CD4-positive, alpha-beta memory T cell (primary cell): ENCODE measurements at regions of chr12 and their contacts with region 1.

Region 1: GRCh38 chr12:56688129-56688845 is at the start of gene PTGES3:
- DNase-seq: peak; percentile 97 to 98 (median 98)
- H3K4me3 ChIP-seq: peak within 1 kb of the TSS; percentile 83 to 99
- H3K4me3 Mint-ChIP-seq: peak within 1 kb of the TSS; percentile 99 to 100 (median 100)
- H3K27ac ChIP-seq: peak within 1 kb of the TSS; percentile 99
- H3K27ac Mint-ChIP-seq: peak within 1 kb of the TSS; percentile 96 to 100 (median 100)
- H3K4me1 ChIP-seq: peaks cover 36% of the 10 kb centered on the region
- H3K4me1 Mint-ChIP-seq: peaks cover 16 to 51% (median 25%) of the 10 kb centered on the region in 4 donors
- H3K27me3 ChIP-seq: no peaks in the 10 kb centered on the region
- H3K27me3 Mint-ChIP-seq: no peaks in the 10 kb centered on the region
- total RNA-seq, gene PTGES3: 191 to 195 TPM

Region 2: DNA sequence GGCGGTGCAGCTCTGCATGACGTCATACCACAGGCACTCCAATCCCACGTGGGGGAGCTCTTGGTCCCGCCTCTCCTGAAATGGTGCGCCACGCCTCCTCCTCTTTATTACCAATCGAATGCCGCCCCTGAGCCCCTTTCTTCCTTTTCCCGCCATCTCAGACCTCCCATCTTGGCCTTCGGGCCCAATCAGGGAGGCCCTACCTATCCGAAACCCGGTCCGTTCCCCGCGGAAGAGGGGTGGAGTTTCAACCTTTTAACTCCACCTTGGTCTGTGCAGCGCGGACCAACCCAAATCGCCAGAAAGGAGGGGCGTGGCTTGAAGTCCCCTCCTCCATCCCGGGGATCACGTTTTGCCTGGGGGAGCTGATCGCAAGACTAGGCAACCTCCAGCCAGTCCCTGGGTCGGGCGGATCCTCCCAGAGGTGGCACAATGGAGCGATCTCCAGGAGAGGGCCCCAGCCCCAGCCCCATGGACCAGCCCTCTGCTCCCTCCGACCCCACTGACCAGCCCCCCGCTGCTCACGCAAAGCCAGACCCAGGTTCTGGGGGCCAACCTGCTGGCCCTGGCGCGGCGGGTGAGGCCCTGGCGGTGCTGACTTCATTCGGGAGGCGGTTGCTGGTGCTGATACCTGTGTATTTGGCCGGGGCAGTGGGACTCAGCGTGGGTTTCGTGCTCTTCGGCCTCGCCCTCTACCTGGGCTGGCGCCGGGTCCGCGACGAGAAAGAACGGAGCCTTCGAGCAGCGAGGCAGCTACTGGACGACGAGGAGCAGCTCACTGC is 560.2 kb before region 1 on chr12 and contains the start of gene ESYT1:
- CTCF ChIA-PET with region 1: no interaction called
- POLR2A ChIA-PET with region 1: no interaction called
- intact Hi-C with region 1: loop called (anchors 5 kb)
- DNase-seq: peak; percentile 96 to 100 (median 99)
- H3K4me3 ChIP-seq: peak within 1 kb of the TSS; percentile 81 to 96
- H3K4me3 Mint-ChIP-seq: peak within 1 kb of the TSS; percentile 96 to 100 (median 98)
- H3K27ac ChIP-seq: peak within 1 kb of the TSS; percentile 82
- H3K27ac Mint-ChIP-seq: peak within 1 kb of the TSS; percentile 89 to 99 (median 98)
- H3K4me1 ChIP-seq: peaks cover 69% of the 10 kb centered on the region
- H3K4me1 Mint-ChIP-seq: peaks cover 46 to 84% (median 59%) of the 10 kb centered on the region in 4 donors
- H3K27me3 ChIP-seq: no peaks in the 10 kb centered on the region
- H3K27me3 Mint-ChIP-seq: no peaks in the 10 kb centered on the region
- total RNA-seq, gene ESYT1: 249 to 258 TPM

Region 3: DNA sequence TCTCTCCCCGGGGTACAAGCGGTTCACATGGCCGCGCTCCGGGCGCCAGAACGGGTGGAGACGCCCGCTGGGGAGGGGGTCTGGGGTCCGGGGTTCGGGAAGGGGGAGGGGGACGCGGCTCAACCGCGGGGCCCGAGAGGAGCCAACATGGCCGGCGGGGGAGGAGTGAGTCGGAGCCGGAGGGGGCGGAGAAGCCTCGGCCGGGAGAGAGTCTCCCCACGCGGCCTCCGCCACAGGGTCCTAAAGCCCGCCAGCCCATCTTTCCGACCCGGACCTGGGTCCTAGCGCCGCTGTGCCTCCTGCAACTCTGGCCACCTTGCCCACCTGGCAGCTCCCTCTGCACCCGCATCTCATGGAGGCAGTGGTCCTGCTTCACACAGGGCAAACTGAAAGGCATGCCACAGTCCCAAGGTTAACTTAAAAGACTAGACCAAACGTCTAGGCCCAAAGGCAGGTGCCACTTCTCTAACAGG is 58.1 kb before region 1 on chr12 and contains the start of gene BAZ2A:
- CTCF ChIA-PET with region 1: interaction called, 40 read pairs
- POLR2A ChIA-PET with region 1: interaction called, 210 read pairs
- intact Hi-C with region 1: loop called (anchors 1 kb)
- DNase-seq: peak; percentile 80 to 86 (median 83)
- H3K4me3 ChIP-seq: peak within 1 kb of the TSS; percentile 90 to 98
- H3K4me3 Mint-ChIP-seq: peak within 1 kb of the TSS; percentile 86 to 99 (median 92)
- H3K27ac ChIP-seq: peak within 1 kb of the TSS; percentile 93
- H3K27ac Mint-ChIP-seq: peak within 1 kb of the TSS; percentile 82 to 98 (median 94)
- H3K4me1 ChIP-seq: peaks cover 76% of the 10 kb centered on the region
- H3K4me1 Mint-ChIP-seq: peaks cover 43 to 81% (median 63%) of the 10 kb centered on the region in 4 donors
- H3K27me3 ChIP-seq: no peaks in the 10 kb centered on the region
- H3K27me3 Mint-ChIP-seq: no peaks in the 10 kb centered on the region
- total RNA-seq, gene BAZ2A: 206 to 212 TPM

Region 4: GRCh38 chr12:56670836-56671235 is 17.5 kb before region 1 on chr12:
- CTCF ChIA-PET with region 1: interaction called, 7 read pairs
- POLR2A ChIA-PET with region 1: interaction called, 21 read pairs
- intact Hi-C with region 1: no loop called
- DNase-seq: no peak
- H3K4me3 ChIP-seq: no peak overlapping the region
- H3K4me3 Mint-ChIP-seq: no peak overlapping the region
- H3K27ac ChIP-seq: no peak overlapping the region
- H3K27ac Mint-ChIP-seq: peak overlapping the region in 1 of 7 donors; percentile 41
- H3K4me1 ChIP-seq: peaks cover 46% of the 10 kb centered on the region
- H3K4me1 Mint-ChIP-seq: peaks cover 18 to 52% (median 36%) of the 10 kb centered on the region in 4 donors
- H3K27me3 ChIP-seq: no peaks in the 10 kb centered on the region
- H3K27me3 Mint-ChIP-seq: no peaks in the 10 kb centered on the region

Region 5: DNA sequence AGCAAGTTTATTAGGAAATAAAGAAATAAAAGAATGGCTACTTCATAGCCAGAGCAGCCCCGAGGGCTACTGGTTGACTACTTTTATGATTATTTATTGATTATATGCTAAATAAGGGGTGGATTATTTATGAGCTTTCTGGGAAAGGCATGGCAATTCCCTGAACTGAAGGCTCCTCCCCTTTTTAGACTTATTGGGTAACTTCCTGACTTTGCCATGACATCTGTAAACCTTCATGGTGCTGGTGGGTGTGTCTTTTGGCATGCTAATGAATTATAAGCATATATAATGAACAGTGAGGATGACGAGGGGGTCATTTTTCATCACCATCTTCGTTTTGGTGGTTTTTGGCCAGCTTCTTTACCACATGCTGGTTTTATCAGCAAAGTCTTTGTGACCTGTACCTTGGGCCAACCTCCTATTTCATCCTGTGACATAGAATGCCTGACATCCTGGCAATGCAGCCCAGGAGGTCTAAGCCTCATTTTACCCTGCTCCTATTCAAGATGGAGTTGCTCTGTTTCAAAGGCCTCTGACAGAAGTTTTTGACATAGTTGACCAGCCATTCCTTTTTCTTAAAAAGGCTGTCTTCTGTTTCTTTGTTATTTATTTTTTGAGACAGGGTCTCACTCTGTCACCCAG is 10.9 kb after region 1 on chr12:
- CTCF ChIA-PET with region 1: no interaction called
- POLR2A ChIA-PET with region 1: no interaction called
- intact Hi-C with region 1: no loop called
- DNase-seq: no peak
- H3K4me3 ChIP-seq: no peak overlapping the region
- H3K4me3 Mint-ChIP-seq: no peak overlapping the region
- H3K27ac ChIP-seq: no peak overlapping the region
- H3K27ac Mint-ChIP-seq: no peak overlapping the region
- H3K4me1 ChIP-seq: no peaks in the 10 kb centered on the region
- H3K4me1 Mint-ChIP-seq: peaks cover 0 to 1% (median 0%) of the 10 kb centered on the region in 4 donors
- H3K27me3 ChIP-seq: no peaks in the 10 kb centered on the region
- H3K27me3 Mint-ChIP-seq: no peaks in the 10 kb centered on the region

Region 6: DNA sequence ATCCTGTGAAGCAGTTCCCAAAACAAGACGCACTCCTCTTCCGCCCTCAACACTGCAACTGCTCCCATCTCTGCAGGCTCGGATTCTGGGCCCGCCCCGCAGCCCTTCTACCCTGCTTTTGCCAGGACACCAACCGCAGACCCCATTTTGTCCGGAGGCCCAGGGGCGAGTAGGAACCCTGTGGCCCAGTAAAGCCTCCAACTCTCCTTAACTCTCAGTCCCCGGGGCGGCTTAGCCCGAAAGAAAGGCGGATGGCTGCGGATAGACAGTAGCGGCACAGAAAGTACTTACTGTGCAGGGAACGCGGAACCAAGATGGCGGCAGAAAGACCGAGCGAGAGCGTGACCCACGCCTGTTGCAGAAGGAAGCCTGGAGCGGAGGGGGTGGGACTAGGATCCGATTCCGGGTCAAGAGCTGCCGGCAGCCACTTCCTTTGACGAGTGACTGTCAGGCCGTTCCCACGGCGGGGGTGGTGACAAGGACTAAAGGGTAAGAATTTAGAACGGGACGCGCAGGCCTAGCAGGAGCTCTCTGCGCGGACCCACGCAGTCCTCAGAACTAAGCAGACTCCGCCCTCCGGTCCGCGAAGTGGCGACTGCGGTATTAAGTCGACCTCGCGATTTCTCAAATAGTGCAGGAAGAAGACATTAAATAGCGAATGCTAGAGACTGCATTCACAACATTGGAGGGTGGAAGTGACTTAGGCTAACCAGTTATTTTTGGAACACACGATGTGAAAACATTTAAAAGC is 36.9 kb after region 1 on chr12 and contains the start of gene NACA:
- CTCF ChIA-PET with region 1: interaction called, 6 read pairs
- POLR2A ChIA-PET with region 1: interaction called, 247 read pairs
- intact Hi-C with region 1: loop called (anchors 1 kb)
- DNase-seq: peak; percentile 94 to 100 (median 98)
- H3K4me3 ChIP-seq: peak within 1 kb of the TSS; percentile 90 to 100
- H3K4me3 Mint-ChIP-seq: peak within 1 kb of the TSS; percentile 90 to 99 (median 98)
- H3K27ac ChIP-seq: peak within 1 kb of the TSS; percentile 90
- H3K27ac Mint-ChIP-seq: peak within 1 kb of the TSS; percentile 92 to 99 (median 97)
- H3K4me1 ChIP-seq: peaks cover 54% of the 10 kb centered on the region
- H3K4me1 Mint-ChIP-seq: peaks cover 41 to 66% (median 51%) of the 10 kb centered on the region in 4 donors
- H3K27me3 ChIP-seq: no peaks in the 10 kb centered on the region
- H3K27me3 Mint-ChIP-seq: no peaks in the 10 kb centered on the region
- total RNA-seq, gene NACA: 1,184 to 1,255 TPM

Region 7: DNA sequence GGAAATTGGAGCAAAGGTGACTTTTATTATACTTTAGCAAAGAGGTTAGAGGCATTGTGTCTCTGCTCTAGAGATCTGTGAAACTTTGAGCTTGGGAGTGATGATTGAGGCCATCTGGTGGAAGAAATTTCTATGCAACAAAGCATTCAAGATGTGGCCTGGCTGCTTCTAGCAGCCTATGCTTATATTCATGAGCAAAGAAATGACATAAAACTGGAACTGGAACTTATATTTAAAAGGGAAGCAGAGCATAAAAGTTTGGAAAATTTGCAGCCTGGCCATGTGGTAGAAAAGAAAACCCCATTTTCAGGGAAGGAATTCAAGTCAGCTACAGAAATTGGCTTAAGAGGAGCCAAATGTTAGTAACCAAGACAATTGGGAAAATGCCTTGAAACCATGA is 175.5 kb after region 1 on chr12:
- CTCF ChIA-PET with region 1: no interaction called
- POLR2A ChIA-PET with region 1: no interaction called
- intact Hi-C with region 1: no loop called
- DNase-seq: no peak
- H3K4me3 ChIP-seq: no peak overlapping the region
- H3K4me3 Mint-ChIP-seq: peak overlapping the region in 1 of 8 donors; percentile 20
- H3K27ac ChIP-seq: no peak overlapping the region
- H3K27ac Mint-ChIP-seq: no peak overlapping the region
- H3K4me1 ChIP-seq: no peaks in the 10 kb centered on the region
- H3K4me1 Mint-ChIP-seq: no peaks in the 10 kb centered on the region
- H3K27me3 ChIP-seq: no peaks in the 10 kb centered on the region
- H3K27me3 Mint-ChIP-seq: peaks cover 13 to 22% of the 10 kb centered on the region in 2 donors

Region 8: DNA sequence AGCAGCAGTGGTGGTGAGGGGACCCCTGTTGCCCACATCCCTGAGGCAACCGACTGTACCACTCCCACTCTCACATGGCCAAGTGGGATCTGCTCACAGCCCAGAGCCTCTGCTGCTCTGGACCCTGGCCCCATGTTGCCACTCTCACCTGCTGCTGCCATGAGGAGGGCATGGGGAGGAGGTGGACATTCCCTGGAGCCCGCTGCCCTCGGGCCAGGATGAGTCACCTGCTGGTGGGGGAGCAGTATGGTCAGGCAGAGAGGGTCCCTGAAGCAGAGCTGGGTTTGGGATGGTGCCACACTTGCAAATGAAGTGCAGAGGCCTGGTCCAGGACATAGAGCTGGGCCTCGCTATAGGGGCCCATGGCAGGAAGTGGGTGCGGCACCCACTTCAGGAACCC is 219.8 kb after region 1 on chr12:
- CTCF ChIA-PET with region 1: no interaction called
- POLR2A ChIA-PET with region 1: no interaction called
- intact Hi-C with region 1: no loop called
- DNase-seq: no peak
- H3K4me3 ChIP-seq: no peak overlapping the region
- H3K4me3 Mint-ChIP-seq: no peak overlapping the region
- H3K27ac ChIP-seq: no peak overlapping the region
- H3K27ac Mint-ChIP-seq: no peak overlapping the region
- H3K4me1 ChIP-seq: no peaks in the 10 kb centered on the region
- H3K4me1 Mint-ChIP-seq: no peaks in the 10 kb centered on the region
- H3K27me3 ChIP-seq: no peaks in the 10 kb centered on the region
- H3K27me3 Mint-ChIP-seq: peaks cover 10 to 12% of the 10 kb centered on the region in 2 donors

Region 9: GRCh38 chr12:57078519-57079404 is 390.5 kb after region 1 on chr12 and contains the start of gene NEMP1:
- CTCF ChIA-PET with region 1: no interaction called
- POLR2A ChIA-PET with region 1: no interaction called
- intact Hi-C with region 1: loop called (anchors 5 kb)
- DNase-seq: peak; percentile 94 to 100 (median 99)
- H3K4me3 ChIP-seq: peak within 1 kb of the TSS; percentile 73 to 94
- H3K4me3 Mint-ChIP-seq: peak within 1 kb of the TSS; percentile 92 to 98 (median 94)
- H3K27ac ChIP-seq: peak within 1 kb of the TSS; percentile 75
- H3K27ac Mint-ChIP-seq: peak within 1 kb of the TSS; percentile 86 to 98 (median 96)
- H3K4me1 ChIP-seq: peaks cover 18% of the 10 kb centered on the region
- H3K4me1 Mint-ChIP-seq: peaks cover 10 to 37% (median 18%) of the 10 kb centered on the region in 4 donors
- H3K27me3 ChIP-seq: no peaks in the 10 kb centered on the region
- H3K27me3 Mint-ChIP-seq: no peaks in the 10 kb centered on the region
- total RNA-seq, gene NEMP1: 27.2 TPM